Dorsolateral prefrontal cortex (tissue), 120 donors: ENCODE measurements at regions of chr14 and their contacts with region 1.

Region 1: GRCh38 chr14:59126710-59127432 is 61.6 kb upstream of the DAAM1 start:
- DNase-seq: peak in 1 of 10 donors; percentile 27
- H3K4me3 ChIP-seq: no peak overlapping the region
- H3K27ac ChIP-seq: no peak overlapping the region
- H3K27me3 ChIP-seq: no peaks in the 10 kb centered on the region
- CTCF ChIP-seq: peak; percentile 78 to 99 (median 88)

Region 2: GRCh38 chr14:58501214-58501816 is 625.6 kb before region 1 on chr14:
- intact Hi-C with region 1: loop called in 1 of 2 experiments (anchors 5 kb)
- DNase-seq: peak in 2 of 10 donors; percentile 26 to 41
- H3K4me3 ChIP-seq: no peak overlapping the region
- H3K27ac ChIP-seq: no peak overlapping the region
- H3K27me3 ChIP-seq: no peaks in the 10 kb centered on the region
- CTCF ChIP-seq: peak; percentile 70 to 97 (median 84)

Region 3: DNA sequence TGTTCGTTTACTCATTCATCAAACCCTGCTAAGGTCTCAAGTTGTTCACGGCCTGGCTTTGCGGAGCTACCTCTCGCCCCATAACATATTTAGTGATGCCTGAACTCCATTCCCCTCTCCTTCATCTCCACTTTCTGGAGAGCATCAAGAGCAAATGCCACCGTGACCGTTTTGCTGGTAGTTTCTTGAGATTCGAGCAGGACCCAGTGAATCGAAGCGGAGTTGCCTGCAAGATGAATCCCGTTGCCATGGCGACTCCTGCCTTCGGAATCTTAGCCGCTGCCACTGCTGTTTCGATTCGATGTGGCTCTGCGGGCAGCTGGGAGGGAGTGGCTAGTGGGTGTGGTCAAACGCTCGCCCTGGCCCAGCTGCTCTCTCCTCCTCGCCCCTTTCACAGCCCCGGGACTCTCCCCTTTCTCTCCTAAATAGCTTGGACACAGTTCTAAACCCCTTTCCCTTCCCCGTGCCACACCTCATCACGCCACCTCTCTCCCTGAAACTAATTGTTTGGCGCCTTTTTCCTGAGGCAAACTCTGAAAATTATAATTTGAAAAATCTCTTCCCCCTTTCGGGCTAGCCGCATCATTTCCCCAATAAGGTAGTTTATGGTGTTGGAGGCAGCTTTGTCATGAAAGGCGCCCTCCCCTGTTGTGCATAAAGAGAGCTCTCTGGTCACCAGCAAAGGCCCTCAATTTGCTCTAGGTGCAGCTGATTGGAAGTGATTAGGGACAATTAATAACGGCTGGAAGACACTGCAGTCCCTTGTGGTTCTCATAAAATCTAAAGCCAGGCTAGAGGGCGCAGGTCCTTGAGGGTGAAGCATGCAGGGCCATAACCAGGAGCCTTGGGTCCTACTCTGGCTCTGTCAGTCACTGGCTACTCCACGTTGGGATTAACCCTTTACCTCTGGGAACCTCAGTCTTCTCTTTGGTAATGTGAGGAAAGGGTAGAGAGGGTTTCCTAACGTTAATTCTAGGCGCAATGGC is 63.2 kb after region 1 on chr14:
- intact Hi-C with region 1: loop called in 1 of 2 experiments (anchors 5 kb)
- DNase-seq: peak; percentile 49 to 89 (median 77)
- H3K4me3 ChIP-seq: peak overlapping the region; percentile 67 to 99 (median 93)
- H3K27ac ChIP-seq: peak overlapping the region in 54 of 59 donors; percentile 73 to 96 (median 88)
- H3K27me3 ChIP-seq: no peaks in the 10 kb centered on the region
- CTCF ChIP-seq: peak in 2 of 56 donors; percentile 12 to 15

Region 4: GRCh38 chr14:59438195-59438647 is 311.4 kb after region 1 on chr14:
- intact Hi-C with region 1: loop called in 1 of 2 experiments (anchors 5 kb)
- DNase-seq: no peak
- H3K4me3 ChIP-seq: no peak overlapping the region
- H3K27ac ChIP-seq: no peak overlapping the region
- H3K27me3 ChIP-seq: no peaks in the 10 kb centered on the region
- CTCF ChIP-seq: no peak

Region 5: DNA sequence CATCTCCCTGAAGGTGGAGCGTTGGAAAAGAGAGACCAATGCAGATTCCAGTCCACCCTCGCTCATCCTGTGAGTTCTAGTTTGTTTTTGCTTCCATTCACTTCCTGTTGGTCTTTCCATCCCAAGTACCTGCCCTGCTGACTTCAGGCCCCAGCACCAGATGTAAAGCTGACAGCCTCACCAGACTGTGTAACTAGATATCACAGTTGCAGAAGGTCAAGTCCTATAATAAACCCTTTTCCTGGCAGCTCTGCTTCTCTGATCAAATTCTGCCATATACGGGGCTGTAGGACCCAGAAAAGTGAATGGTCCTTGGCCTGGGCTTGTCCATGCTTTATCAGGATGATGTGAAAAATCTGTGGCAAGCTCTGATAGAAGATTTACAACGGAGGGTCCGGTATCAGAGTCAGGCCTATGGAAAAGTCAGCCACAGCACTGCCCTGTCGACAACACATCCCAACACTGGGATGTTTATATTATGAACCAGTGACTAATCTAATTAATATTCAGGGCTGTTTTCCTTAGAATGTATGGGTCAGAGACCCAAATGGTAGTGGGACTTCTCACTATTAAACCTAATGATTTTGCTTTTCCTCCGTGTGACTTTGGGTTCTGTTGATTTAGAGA is 407.6 kb after region 1 on chr14:
- intact Hi-C with region 1: no loop called
- DNase-seq: no peak
- H3K4me3 ChIP-seq: no peak overlapping the region
- H3K27ac ChIP-seq: peak overlapping the region in 1 of 59 donors; percentile 8
- H3K27me3 ChIP-seq: no peaks in the 10 kb centered on the region
- CTCF ChIP-seq: no peak

Region 6: DNA sequence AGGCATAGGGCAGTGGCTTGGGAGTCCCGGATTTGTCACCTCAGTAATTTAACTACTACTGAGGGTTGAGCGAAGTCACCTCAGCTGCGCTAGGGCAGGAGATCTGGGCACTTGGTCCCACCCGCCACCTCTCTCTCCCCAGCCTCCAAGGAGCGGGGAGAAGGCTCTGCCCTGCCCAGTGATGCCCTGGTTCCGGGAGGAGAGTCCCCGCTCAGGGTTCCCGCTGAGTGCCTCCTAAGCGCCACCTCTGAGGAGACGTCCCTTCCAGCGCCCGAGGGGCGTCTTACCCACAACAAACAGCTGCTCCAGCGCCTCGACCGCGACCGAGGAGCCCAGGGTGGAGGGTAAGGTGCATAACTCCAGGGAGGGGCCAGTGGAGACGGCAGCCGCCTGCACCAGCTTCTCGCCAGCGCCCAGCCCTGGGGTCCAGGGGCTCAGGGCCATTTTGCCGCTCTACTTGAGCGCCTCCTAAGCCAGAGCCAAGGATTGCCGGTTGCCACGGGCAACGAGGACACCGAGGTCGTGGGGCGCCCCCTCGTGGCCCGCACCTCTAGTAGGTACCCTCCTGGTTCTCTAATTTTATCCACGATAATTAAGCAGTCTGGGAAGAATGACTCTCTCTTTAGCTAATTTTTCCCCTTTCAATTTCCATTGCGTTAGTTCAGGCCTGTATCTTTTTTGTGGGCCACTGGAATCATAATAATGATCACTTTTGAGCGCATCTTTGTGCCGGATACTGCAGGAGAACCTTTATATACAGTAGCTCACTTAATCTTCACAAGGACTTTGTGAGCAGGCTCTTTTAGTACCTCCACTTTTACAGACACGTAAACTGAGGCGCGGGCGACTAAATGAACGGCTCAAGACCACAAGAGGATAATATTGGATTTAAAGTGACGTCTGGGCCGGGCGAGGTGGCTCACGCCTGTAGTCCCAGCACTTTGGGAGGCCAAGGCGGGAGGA is 449.7 kb after region 1 on chr14 and contains the start of gene CCDC175:
- intact Hi-C with region 1: loop called in 1 of 2 experiments (anchors 5 kb)
- DNase-seq: peak; percentile 82 to 95 (median 86)
- H3K4me3 ChIP-seq: peak within 1 kb of the TSS; percentile 26 to 84 (median 65)
- H3K27ac ChIP-seq: peak within 1 kb of the TSS in 12 of 59 donors; percentile 2 to 77 (median 48)
- H3K27me3 ChIP-seq: no peaks in the 10 kb centered on the region
- CTCF ChIP-seq: peak; percentile 54 to 88 (median 78)
- total RNA-seq, gene CCDC175: 0.84 to 8.3 (median 3.7) TPM